Naive thymus-derived CD4-positive, alpha-beta T cell (primary cell): ENCODE measurements at regions of chr12 and their contacts with region 1.

Region 1: DNA sequence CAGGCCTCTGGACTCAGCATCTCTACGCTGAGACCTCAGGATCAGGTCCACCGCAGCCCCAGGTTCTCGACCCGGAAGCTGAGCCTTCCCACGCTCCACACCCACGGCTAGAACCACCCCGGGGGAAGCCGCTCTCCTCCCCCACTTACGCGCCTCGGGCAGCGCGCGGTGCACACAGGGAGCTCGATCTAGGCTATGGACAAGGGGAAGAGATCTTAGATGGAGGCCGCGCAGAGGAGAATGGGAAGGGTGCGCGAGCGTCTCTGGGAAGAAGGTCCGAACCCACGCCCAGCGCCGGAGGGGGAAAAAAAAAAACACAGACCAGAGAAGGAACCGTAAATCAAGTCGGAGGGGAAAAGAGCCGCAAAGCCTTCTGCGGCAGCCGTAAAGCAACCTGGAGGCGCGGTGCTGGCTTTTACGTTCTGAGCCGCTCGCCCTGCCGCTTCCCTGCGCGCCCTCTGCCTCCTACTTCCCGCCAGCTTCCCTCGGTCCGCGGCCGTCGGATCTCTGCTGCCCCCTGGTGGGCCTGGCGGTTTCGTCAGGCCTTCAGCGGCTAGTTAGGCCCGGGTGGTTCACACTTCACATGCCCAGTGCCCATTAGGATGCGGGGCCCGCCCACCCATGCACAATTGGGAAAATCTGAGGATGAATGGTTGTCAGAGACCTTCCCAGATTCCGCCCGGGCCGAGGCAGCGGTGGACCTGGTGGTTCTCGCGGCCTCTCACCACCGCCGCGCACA is at the start of gene RAD52:
- DNase-seq: peak; percentile 94 to 99 (median 97)
- ATAC-seq: peak; percentile 96
- H3K4me3 ChIP-seq: peak within 1 kb of the TSS; percentile 83
- H3K4me3 Mint-ChIP-seq: peak within 1 kb of the TSS; percentile 90 to 98 (median 94)
- H3K27ac ChIP-seq: peak within 1 kb of the TSS; percentile 78
- H3K27ac Mint-ChIP-seq: peak within 1 kb of the TSS; percentile 88 to 98 (median 93)
- H3K4me1 ChIP-seq: peaks cover 0 to 3% of the 10 kb centered on the region in 2 donors
- H3K4me1 Mint-ChIP-seq: peaks cover 20 to 34% (median 30%) of the 10 kb centered on the region in 7 donors
- H3K27me3 ChIP-seq: no peaks in the 10 kb centered on the region
- H3K27me3 Mint-ChIP-seq: peaks cover 0 to 4% (median 0%) of the 10 kb centered on the region in 5 donors
- total RNA-seq, gene RAD52: 11.0 to 34.9 (median 18.3) TPM

Region 2: GRCh38 chr12:389139-390096 is 560.2 kb before region 1 on chr12 and contains the start of gene KDM5A:
- CTCF ChIA-PET with region 1: no interaction called
- POLR2A ChIA-PET with region 1: no interaction called
- intact Hi-C with region 1: loop called (anchors 1 kb)
- DNase-seq: peak; percentile 82 to 97 (median 94)
- ATAC-seq: peak; percentile 97
- H3K4me3 ChIP-seq: peak within 1 kb of the TSS; percentile 96
- H3K4me3 Mint-ChIP-seq: peak within 1 kb of the TSS; percentile 91 to 100 (median 97)
- H3K27ac ChIP-seq: peak within 1 kb of the TSS; percentile 91
- H3K27ac Mint-ChIP-seq: peak within 1 kb of the TSS; percentile 95 to 100 (median 99)
- H3K4me1 ChIP-seq: peaks cover 31% of the 10 kb centered on the region in 2 donors
- H3K4me1 Mint-ChIP-seq: peaks cover 28 to 55% (median 39%) of the 10 kb centered on the region in 7 donors
- H3K27me3 ChIP-seq: no peaks in the 10 kb centered on the region
- H3K27me3 Mint-ChIP-seq: peaks cover 0 to 3% (median 0%) of the 10 kb centered on the region in 5 donors
- total RNA-seq, gene KDM5A: 110 to 138 (median 124) TPM

Region 3: DNA sequence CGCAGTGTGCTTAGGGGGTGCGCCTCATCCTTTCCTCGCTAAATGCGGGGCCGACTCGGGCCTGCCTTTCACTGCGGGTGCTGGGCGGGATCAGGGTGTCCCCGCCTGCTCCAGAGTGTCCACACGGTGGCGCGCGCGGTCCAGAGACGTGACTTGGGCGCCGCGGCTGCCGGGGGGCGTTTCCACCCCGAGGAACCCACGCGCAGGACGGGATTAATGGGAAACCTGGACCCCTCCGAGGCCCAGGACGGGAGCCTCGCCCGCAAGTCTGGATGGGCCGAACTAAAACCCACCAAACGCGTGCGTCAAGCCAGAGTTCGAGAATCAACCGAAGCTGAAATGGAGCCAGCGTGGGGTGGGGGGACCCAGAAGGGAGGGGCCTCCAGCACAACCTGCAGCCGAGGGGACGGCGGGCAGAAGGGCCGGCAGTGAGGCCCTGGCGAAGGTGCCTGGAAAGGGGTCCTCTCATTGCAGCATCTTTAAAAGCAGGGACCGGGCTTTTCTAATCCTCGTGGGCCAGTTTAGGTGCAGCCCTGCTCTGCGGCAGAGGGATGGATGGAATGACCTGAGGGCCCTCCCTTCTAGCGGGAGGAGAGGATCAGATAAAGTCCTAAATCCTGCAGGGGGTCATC is 379.7 kb before region 1 on chr12:
- CTCF ChIA-PET with region 1: interaction called, 11 read pairs
- POLR2A ChIA-PET with region 1: interaction called, 4 read pairs
- intact Hi-C with region 1: loop called (anchors 1 to 2 kb)
- DNase-seq: peak; percentile 72 to 90 (median 84)
- ATAC-seq: peak; percentile 99
- H3K4me3 ChIP-seq: peak overlapping the region; percentile 78
- H3K4me3 Mint-ChIP-seq: peak overlapping the region; percentile 81 to 92 (median 85)
- H3K27ac ChIP-seq: peak overlapping the region; percentile 69
- H3K27ac Mint-ChIP-seq: peak overlapping the region; percentile 47 to 91 (median 80)
- H3K4me1 ChIP-seq: peaks cover 25 to 47% of the 10 kb centered on the region in 2 donors
- H3K4me1 Mint-ChIP-seq: peaks cover 33 to 58% (median 54%) of the 10 kb centered on the region in 7 donors
- H3K27me3 ChIP-seq: no peaks in the 10 kb centered on the region
- H3K27me3 Mint-ChIP-seq: no peaks in the 10 kb centered on the region

Region 4: DNA sequence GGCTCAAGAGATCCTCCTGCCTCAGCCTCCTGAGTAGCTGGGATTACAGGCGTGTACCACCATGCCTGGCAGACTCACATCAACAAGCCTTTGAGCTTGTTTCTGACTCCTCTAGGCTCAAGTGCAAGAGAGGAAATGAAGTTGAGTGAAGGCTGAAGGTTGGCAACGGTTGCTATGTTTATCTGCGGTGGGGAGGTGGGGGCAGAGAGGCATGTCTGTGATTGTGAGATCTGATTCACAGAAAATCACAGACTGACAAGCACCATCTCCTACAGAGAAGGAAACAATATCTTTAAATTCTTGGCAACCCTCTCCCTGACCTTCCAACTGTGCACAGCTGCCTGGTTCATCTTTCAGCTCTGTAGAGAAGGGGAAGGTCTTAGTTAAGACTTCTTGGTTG is 264.2 kb before region 1 on chr12:
- CTCF ChIA-PET with region 1: no interaction called
- POLR2A ChIA-PET with region 1: no interaction called
- intact Hi-C with region 1: loop called in 1 of 2 experiments (anchors 1 kb)
- DNase-seq: peak; percentile 48 to 96 (median 94)
- ATAC-seq: peak; percentile 96
- H3K4me3 ChIP-seq: no peak overlapping the region
- H3K4me3 Mint-ChIP-seq: peak overlapping the region; percentile 30 to 78 (median 72)
- H3K27ac ChIP-seq: peak overlapping the region; percentile 81
- H3K27ac Mint-ChIP-seq: peak overlapping the region; percentile 90 to 99 (median 98)
- H3K4me1 ChIP-seq: peaks cover 23 to 31% of the 10 kb centered on the region in 2 donors
- H3K4me1 Mint-ChIP-seq: peaks cover 23 to 53% (median 48%) of the 10 kb centered on the region in 7 donors
- H3K27me3 ChIP-seq: no peaks in the 10 kb centered on the region
- H3K27me3 Mint-ChIP-seq: no peaks in the 10 kb centered on the region

Region 5: GRCh38 chr12:857611-858010 is 92.0 kb before region 1 on chr12:
- CTCF ChIA-PET with region 1: no interaction called
- POLR2A ChIA-PET with region 1: no interaction called
- intact Hi-C with region 1: no loop called
- DNase-seq: no peak
- ATAC-seq: no peak
- H3K4me3 ChIP-seq: no peak overlapping the region
- H3K4me3 Mint-ChIP-seq: no peak overlapping the region
- H3K27ac ChIP-seq: no peak overlapping the region
- H3K27ac Mint-ChIP-seq: peak overlapping the region in 6 of 9 donors; percentile 41 to 80 (median 60)
- H3K4me1 ChIP-seq: no peaks in the 10 kb centered on the region
- H3K4me1 Mint-ChIP-seq: peaks cover 2 to 50% (median 17%) of the 10 kb centered on the region in 7 donors
- H3K27me3 ChIP-seq: no peaks in the 10 kb centered on the region
- H3K27me3 Mint-ChIP-seq: no peaks in the 10 kb centered on the region

Region 6: GRCh38 chr12:936377-937345 is 13.0 kb before region 1 on chr12:
- CTCF ChIA-PET with region 1: interaction called, 3 read pairs
- POLR2A ChIA-PET with region 1: interaction called, 3 read pairs
- intact Hi-C with region 1: loop called in 1 of 2 experiments (anchors 2 kb)
- DNase-seq: no peak
- ATAC-seq: no peak
- H3K4me3 ChIP-seq: no peak overlapping the region
- H3K4me3 Mint-ChIP-seq: no peak overlapping the region
- H3K27ac ChIP-seq: no peak overlapping the region
- H3K27ac Mint-ChIP-seq: no peak overlapping the region
- H3K4me1 ChIP-seq: no peaks in the 10 kb centered on the region
- H3K4me1 Mint-ChIP-seq: peaks cover 0 to 25% (median 9%) of the 10 kb centered on the region in 7 donors
- H3K27me3 ChIP-seq: no peaks in the 10 kb centered on the region
- H3K27me3 Mint-ChIP-seq: no peaks in the 10 kb centered on the region

Region 7: DNA sequence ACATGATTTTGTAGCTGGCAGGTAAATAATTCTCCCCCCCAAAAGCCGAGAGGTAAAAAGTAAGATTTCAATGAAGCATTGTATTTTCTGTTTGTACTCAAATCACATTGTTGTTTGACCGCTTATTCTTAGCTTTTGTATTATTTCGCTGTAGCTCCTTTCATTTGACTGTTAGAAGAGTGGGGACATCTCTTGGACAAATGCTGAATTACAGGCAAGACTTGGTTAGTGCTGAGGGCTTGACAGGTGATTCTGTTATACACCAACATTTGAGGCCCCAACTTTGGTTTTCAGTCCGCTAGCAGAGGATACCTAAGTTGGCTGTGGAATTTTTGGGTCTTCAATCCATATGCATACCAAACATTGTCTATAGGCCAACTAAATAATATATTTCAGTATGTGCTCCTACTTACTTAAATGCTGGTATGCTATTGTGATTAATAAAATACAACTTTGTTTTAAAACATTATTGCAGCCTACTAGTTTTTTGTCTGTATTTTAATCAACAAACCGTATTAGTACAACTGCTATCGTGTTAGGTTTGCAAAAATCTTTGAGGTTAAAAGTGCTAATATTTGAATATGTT is 143.6 kb after region 1 on chr12:
- CTCF ChIA-PET with region 1: no interaction called
- POLR2A ChIA-PET with region 1: no interaction called
- intact Hi-C with region 1: loop called in 1 of 2 experiments (anchors 5 kb)
- DNase-seq: peak in 7 of 9 donors; percentile 29 to 63 (median 43)
- ATAC-seq: peak; percentile 78
- H3K4me3 ChIP-seq: no peak overlapping the region
- H3K4me3 Mint-ChIP-seq: no peak overlapping the region
- H3K27ac ChIP-seq: no peak overlapping the region
- H3K27ac Mint-ChIP-seq: no peak overlapping the region
- H3K4me1 ChIP-seq: no peaks in the 10 kb centered on the region
- H3K4me1 Mint-ChIP-seq: peaks cover 5 to 30% (median 7%) of the 10 kb centered on the region in 7 donors
- H3K27me3 ChIP-seq: no peaks in the 10 kb centered on the region
- H3K27me3 Mint-ChIP-seq: no peaks in the 10 kb centered on the region

Region 8: GRCh38 chr12:1162081-1162760 is 212.6 kb after region 1 on chr12:
- CTCF ChIA-PET with region 1: no interaction called
- POLR2A ChIA-PET with region 1: no interaction called
- intact Hi-C with region 1: no loop called
- DNase-seq: no peak
- ATAC-seq: no peak
- H3K4me3 ChIP-seq: no peak overlapping the region
- H3K4me3 Mint-ChIP-seq: no peak overlapping the region
- H3K27ac ChIP-seq: no peak overlapping the region
- H3K27ac Mint-ChIP-seq: no peak overlapping the region
- H3K4me1 ChIP-seq: no peaks in the 10 kb centered on the region
- H3K4me1 Mint-ChIP-seq: peaks cover 0 to 15% (median 4%) of the 10 kb centered on the region in 7 donors
- H3K27me3 ChIP-seq: no peaks in the 10 kb centered on the region
- H3K27me3 Mint-ChIP-seq: no peaks in the 10 kb centered on the region